ENCODE measurements at regions of chr18 and their contacts with region 1.

Region 1: GRCh38 chr18:22563098-22563707 is 145.5 kb upstream of the CTAGE1 start:
- DNase-seq: peak; percentile 85
- H3K4me3 ChIP-seq: peak overlapping the region; percentile 12 to 23 (median 19)
- H3K27ac ChIP-seq: peak overlapping the region; percentile 41
- H3K4me1 ChIP-seq: peaks cover 31% of the 10 kb centered on the region
- H3K27me3 ChIP-seq: no peaks in the 10 kb centered on the region
- CTCF ChIP-seq: peak; percentile 89

Region 2: DNA sequence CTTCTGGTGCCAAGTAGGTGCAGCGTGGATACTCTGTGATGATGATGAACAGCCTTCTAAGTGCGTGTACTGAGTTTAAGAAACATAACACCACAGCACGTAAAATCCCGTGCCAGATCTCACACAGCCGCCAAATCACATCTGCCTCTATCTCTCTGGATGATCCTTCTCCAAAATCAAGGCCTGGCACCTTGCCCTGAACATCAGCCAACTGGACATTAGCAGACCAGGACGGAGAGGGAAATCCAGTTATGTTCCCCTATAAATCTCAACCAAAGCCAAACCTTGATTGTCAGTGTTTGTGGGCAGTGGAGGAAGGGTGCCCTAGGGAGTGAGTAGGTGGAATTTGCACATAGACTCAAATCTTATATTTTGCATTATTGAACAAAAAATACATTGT is 658.3 kb before region 1 on chr18:
- CTCF ChIA-PET with region 1: no interaction called
- dilution Hi-C with region 1: no loop called
- in situ Hi-C with region 1: loop called (anchors 10 kb)
- intact Hi-C with region 1: no loop called
- DNase-seq: no peak
- H3K4me3 ChIP-seq: no peak overlapping the region
- H3K27ac ChIP-seq: no peak overlapping the region
- H3K4me1 ChIP-seq: no peaks in the 10 kb centered on the region
- H3K27me3 ChIP-seq: no peaks in the 10 kb centered on the region
- CTCF ChIP-seq: no peak

Region 3: GRCh38 chr18:22108674-22109073 is 454.5 kb before region 1 on chr18:
- CTCF ChIA-PET with region 1: no interaction called
- dilution Hi-C with region 1: no loop called
- in situ Hi-C with region 1: no loop called
- intact Hi-C with region 1: loop called (anchors 2 kb)
- DNase-seq: no peak
- H3K4me3 ChIP-seq: no peak overlapping the region
- H3K27ac ChIP-seq: no peak overlapping the region
- H3K4me1 ChIP-seq: no peaks in the 10 kb centered on the region
- H3K27me3 ChIP-seq: no peaks in the 10 kb centered on the region
- CTCF ChIP-seq: peak in 1 of 2 donors; percentile 2

Region 4: DNA sequence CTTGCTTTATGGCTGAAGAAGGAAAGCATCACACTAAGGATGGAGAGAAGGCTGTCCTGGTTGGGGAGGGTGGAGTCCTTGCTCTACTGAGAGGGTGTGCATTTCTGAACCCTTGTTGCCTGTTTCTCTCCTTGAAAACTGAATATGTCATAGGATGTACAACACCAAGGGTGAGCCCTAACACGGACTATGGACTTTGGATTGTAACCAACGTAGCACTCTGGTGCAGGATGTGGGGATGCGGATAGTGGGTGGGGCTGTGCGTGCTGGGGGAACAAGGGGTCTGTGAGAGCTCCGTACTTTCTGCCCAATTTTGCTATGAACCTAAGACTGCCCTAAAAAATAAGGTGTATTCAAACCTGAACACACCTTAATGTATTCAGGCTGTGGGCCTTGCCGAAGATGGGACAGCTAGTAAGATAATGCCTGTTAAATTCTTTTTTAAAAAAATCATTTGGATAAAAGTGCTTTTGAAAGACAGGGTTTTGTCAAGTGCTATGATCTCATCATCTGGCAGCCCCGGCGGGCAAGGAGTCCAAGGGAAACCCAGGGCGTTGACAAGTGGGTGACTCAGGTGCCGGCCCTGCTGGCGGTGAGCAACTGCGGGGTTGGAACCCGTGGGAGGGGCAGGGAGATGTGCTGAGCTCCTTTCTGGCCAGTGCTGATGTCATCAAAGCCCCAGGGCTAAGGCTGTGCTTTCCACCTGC is 339.8 kb before region 1 on chr18:
- CTCF ChIA-PET with region 1: no interaction called
- dilution Hi-C with region 1: no loop called
- in situ Hi-C with region 1: no loop called
- intact Hi-C with region 1: loop called (anchors 10 kb)
- DNase-seq: peak; percentile 99
- H3K4me3 ChIP-seq: no peak overlapping the region
- H3K27ac ChIP-seq: no peak overlapping the region
- H3K4me1 ChIP-seq: peaks cover 16% of the 10 kb centered on the region
- H3K27me3 ChIP-seq: no peaks in the 10 kb centered on the region
- CTCF ChIP-seq: no peak

Region 5: DNA sequence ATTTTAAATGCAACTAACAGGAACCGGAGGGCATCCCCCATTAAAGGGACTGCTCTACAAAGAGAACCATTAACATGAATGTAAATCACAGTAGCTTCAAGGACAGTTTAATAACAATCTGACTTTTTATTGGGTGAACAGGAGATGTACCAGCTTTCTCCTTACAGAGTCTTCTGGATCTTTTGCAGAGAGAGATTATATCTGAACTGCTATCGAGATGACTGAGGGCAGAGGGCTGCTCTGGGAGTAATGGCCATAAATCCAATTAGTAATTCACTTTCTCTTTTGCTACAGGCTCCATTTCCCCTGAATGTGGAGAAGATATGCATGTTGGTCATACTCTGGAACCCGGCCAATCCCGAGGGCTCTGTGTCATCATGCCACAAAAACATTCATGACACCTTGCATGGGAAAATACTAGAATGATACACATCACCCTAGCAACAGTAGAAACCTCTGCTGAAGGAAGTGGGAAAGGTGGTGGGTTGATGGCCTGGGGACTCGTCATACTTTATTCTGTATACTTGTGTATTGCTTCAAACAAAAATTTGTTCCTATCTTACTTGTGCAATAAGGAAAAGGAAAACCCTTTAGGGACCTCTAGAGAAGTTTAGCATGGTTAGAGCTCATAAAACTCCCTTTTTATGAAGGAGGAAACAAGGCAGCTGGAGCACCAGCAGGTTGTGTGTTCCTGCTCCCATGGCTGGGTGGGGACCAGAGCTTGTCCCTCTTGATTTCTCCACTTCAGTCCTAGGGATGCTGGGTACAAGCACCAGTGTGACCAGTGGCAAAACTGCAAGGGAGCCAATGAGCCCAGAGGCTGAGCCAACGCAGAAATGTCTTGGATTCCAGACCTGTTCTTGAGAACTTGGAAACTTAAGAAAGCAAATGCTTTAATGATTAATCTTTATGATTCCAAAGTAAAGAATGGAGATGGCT is 171.5 kb before region 1 on chr18:
- CTCF ChIA-PET with region 1: no interaction called
- dilution Hi-C with region 1: no loop called
- in situ Hi-C with region 1: loop called in 1 of 2 experiments (anchors 25 kb)
- intact Hi-C with region 1: loop called (anchors 5 kb)
- DNase-seq: peak; percentile 99
- H3K4me3 ChIP-seq: no peak overlapping the region
- H3K27ac ChIP-seq: peak overlapping the region; percentile 74
- H3K4me1 ChIP-seq: peaks cover 15% of the 10 kb centered on the region
- H3K27me3 ChIP-seq: no peaks in the 10 kb centered on the region
- CTCF ChIP-seq: no peak

Region 6: DNA sequence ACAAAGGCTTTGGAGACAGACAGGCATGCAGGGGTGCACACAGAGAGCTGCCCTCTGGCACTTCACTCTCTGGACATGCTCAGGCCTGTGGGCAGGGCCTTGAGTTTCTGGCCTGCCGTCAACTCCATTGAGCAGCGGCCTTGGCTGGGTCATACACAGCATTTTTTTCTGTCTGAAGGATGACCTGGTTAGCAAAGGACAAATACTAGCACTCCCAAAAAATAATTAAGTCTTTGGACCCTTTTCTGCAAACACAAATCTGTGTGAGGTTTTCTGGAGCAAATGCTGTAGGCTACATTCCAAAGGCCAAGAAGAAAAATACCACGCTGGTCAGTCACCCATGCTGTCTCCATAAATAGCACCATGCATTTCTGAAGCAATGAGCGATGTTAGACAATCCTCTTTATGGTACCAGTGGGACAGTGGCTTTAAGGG is 20.8 kb before region 1 on chr18:
- CTCF ChIA-PET with region 1: no interaction called
- dilution Hi-C with region 1: no loop called
- in situ Hi-C with region 1: no loop called
- intact Hi-C with region 1: loop called (anchors 1 kb)
- DNase-seq: peak; percentile 60
- H3K4me3 ChIP-seq: no peak overlapping the region
- H3K27ac ChIP-seq: no peak overlapping the region
- H3K4me1 ChIP-seq: peaks cover 25% of the 10 kb centered on the region
- H3K27me3 ChIP-seq: no peaks in the 10 kb centered on the region
- CTCF ChIP-seq: no peak

Measured in mammary epithelial cell (primary cell).